ENCODE measurements at regions of chr1 and their contacts with region 1.

Region 1: GRCh38 chr1:156838981-156839410 is 19.9 kb downstream of the INSRR start:
- DNase-seq: peak; percentile 60
- ATAC-seq: peak; percentile 56
- H3K4me3 ChIP-seq: no peak overlapping the region
- H3K4me3 Mint-ChIP-seq: no peak overlapping the region
- H3K27ac ChIP-seq: no peak overlapping the region
- H3K27ac Mint-ChIP-seq: no peak overlapping the region
- H3K4me1 ChIP-seq: no peaks in the 10 kb centered on the region
- H3K4me1 Mint-ChIP-seq: peaks cover 2% of the 10 kb centered on the region
- H3K27me3 ChIP-seq: peaks cover 0 to 44% (median 13%) of the 10 kb centered on the region in 4 experiments
- H3K27me3 Mint-ChIP-seq: peaks cover 71% of the 10 kb centered on the region
- CTCF ChIP-seq: peak; percentile 85

Region 2: DNA sequence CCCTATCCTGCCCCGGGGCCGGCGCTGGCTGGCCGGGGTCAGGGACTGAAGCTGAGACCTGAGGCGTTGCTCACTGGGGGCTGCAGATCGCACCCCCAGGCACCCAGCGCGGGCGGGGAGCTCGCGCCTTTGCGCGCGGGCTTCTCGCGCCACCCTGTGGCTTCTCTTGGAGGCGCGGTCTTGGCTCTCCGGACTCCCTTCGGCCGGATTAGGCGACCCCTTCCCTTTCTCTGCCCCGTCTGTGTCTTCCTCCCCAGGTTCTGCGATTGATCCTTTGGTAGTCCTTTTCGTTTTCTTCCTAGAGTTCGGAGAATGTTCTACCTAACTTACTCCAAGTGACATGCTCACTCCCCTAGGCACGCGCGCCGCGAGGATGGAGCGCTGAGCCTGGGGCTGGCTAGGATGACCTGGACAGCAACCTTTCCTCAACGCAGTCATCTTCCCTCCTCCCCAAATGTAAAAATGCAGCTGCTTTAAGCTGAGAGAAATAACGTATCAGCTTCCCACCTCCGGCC is 21.2 kb after region 1 on chr1:
- CTCF ChIA-PET with region 1: interaction called, 26 read pairs
- POLR2A ChIA-PET with region 1: no interaction called
- intact Hi-C with region 1: no loop called
- DNase-seq: peak; percentile 71
- ATAC-seq: peak; percentile 73
- H3K4me3 ChIP-seq: peak overlapping the region in 4 of 5 experiments; percentile 15 to 54 (median 44)
- H3K4me3 Mint-ChIP-seq: peak overlapping the region; percentile 83
- H3K27ac ChIP-seq: no peak overlapping the region
- H3K27ac Mint-ChIP-seq: no peak overlapping the region
- H3K4me1 ChIP-seq: peaks cover 23 to 30% of the 10 kb centered on the region in 2 donors
- H3K4me1 Mint-ChIP-seq: peaks cover 18% of the 10 kb centered on the region
- H3K27me3 ChIP-seq: peaks cover 0 to 80% (median 39%) of the 10 kb centered on the region in 4 experiments
- H3K27me3 Mint-ChIP-seq: peaks cover 67% of the 10 kb centered on the region
- CTCF ChIP-seq: peak; percentile 73

Region 3: DNA sequence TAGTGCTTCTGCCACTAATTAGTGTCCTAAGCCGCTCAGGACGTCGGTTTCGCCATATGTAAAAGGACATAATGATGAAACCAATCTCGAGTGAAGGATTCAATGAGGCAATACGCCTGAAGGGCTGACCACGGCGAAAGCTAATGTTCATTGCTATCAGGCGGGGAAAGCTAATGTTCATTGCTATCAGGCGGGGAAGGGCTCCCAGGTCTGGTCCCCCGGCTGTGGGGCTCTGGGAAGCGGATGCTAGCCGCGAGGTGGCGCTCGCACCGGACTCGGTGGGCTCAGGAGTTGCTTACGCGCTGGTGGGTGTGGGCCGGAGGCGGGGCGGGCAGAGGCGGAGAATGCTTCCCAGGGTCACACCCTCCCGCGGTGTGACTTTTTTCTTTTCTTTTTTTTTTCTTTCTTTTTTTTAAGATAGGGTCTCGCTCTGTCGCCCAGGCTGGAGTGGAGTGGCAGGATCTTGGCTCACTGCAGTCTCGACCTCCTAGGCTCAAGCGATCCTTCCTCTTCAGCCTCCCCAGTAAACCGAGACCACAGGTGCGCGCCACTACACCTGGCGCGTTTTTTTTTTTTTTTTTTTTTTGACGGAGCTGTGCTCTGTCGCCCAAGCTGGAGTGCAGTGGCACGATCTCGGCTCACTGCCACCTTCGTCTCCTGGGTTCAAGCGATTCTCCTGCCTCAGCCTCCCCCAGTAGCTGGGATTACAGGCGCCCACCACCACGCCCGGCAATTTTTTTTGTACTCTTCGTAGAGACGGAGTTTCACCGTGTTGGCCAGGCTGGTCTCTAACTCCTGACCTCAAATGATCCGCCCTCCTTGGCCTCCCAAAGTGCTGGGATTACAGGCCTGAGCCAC is 53.4 kb after region 1 on chr1:
- CTCF ChIA-PET with region 1: interaction called, 5 read pairs
- POLR2A ChIA-PET with region 1: no interaction called
- intact Hi-C with region 1: loop called (anchors 1 kb)
- DNase-seq: peak; percentile 83
- ATAC-seq: peak; percentile 85
- H3K4me3 ChIP-seq: peak overlapping the region in 2 of 5 experiments; percentile 2 to 17
- H3K4me3 Mint-ChIP-seq: peak overlapping the region; percentile 78
- H3K27ac ChIP-seq: no peak overlapping the region
- H3K27ac Mint-ChIP-seq: no peak overlapping the region
- H3K4me1 ChIP-seq: peaks cover 21 to 24% of the 10 kb centered on the region in 2 donors
- H3K4me1 Mint-ChIP-seq: peaks cover 15% of the 10 kb centered on the region
- H3K27me3 ChIP-seq: peaks cover 0 to 66% (median 28%) of the 10 kb centered on the region in 4 experiments
- H3K27me3 Mint-ChIP-seq: peaks cover 68% of the 10 kb centered on the region
- CTCF ChIP-seq: peak; percentile 76

Region 4: GRCh38 chr1:157019457-157019856 is 180.5 kb after region 1 on chr1:
- CTCF ChIA-PET with region 1: no interaction called
- POLR2A ChIA-PET with region 1: no interaction called
- intact Hi-C with region 1: no loop called
- DNase-seq: no peak
- ATAC-seq: no peak
- H3K4me3 ChIP-seq: no peak overlapping the region
- H3K4me3 Mint-ChIP-seq: no peak overlapping the region
- H3K27ac ChIP-seq: no peak overlapping the region
- H3K27ac Mint-ChIP-seq: no peak overlapping the region
- H3K4me1 ChIP-seq: no peaks in the 10 kb centered on the region
- H3K4me1 Mint-ChIP-seq: no peaks in the 10 kb centered on the region
- H3K27me3 ChIP-seq: peaks cover 0 to 14% (median 6%) of the 10 kb centered on the region in 4 experiments
- H3K27me3 Mint-ChIP-seq: peaks cover 45% of the 10 kb centered on the region
- CTCF ChIP-seq: no peak

Measured in B cell (primary cell).